ENCODE measurements at regions of chr1 and their contacts with region 1.

Region 1: DNA sequence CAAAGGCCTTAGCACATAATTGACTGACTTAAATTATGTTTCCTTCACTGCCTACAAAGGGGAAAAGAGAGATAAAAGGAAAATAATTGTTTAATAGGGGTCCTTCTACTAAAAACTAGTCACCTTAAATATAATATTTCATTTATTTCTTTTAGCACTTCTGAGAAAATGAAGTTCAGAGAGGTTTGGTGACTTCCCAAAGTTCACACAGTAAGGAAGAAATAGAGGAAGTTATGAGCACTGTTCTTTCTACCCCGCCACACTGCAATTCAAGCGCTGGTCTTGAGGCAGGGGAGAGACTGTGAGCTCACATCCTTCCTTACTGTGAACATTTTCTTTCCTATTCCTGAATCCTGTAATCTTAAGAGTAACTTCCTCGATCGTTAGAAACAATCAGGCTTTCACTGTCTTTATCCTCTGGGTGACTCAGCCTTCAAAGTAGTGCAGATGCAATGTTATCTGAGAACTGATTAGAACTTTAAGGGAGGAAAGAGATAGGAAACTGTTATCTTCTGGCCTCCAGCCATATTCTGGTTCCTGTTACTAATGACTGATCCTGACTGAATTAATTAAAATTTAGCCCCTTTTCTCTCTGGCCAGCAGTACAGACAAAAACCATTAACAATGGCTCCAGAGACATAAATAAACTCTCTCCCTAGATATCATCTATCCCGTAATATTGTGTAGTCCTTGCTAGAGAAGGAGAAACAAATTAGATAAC is 6.8 kb downstream of the RGS5 start:
- DNase-seq: no peak
- ATAC-seq: peak; percentile 62 to 88 (median 79)
- H3K4me3 ChIP-seq: peak overlapping the region in 7 of 12 donors; percentile 10 to 57 (median 51)
- H3K27ac ChIP-seq: peak overlapping the region in 8 of 12 donors; percentile 9 to 59 (median 42)
- H3K4me1 ChIP-seq: peaks cover 0 to 29% (median 7%) of the 10 kb centered on the region in 12 donors
- H3K27me3 ChIP-seq: no peaks in the 10 kb centered on the region
- CTCF ChIP-seq: no peak
- POLR2A ChIP-seq: no peak

Region 2: DNA sequence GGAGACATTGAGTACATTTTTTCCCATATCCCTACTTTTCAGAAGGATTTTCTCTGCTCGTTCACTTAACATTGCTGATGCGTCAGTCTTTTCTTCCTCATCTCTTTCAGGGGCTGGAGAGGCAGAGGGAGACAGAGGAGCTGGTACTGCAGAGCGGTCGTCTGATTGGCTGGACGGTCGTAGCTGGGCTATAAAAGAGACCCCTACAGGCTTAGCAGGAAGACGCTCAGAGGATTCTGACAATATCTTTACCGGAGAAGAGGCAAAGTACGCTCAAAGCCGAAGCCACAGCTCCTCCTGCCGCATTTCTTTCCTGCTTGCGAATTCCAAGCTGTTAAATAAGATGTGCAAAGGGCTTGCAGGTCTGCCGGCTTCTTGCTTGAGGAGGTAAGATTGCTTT is 126.7 kb before region 1 on chr1 and contains the start of gene RGS4:
- intact Hi-C with region 1: no loop called
- DNase-seq: peak; percentile 55 to 70 (median 64)
- ATAC-seq: peak; percentile 92 to 98 (median 94)
- H3K4me3 ChIP-seq: peak within 1 kb of the TSS in 11 of 12 donors; percentile 12 to 65 (median 48)
- H3K27ac ChIP-seq: peak within 1 kb of the TSS in 7 of 12 donors; percentile 3 to 62 (median 41)
- H3K4me1 ChIP-seq: peaks cover 0 to 5% (median 0%) of the 10 kb centered on the region in 12 donors
- H3K27me3 ChIP-seq: peaks cover 0 to 18% (median 0%) of the 10 kb centered on the region in 9 donors
- CTCF ChIP-seq: peak in 7 of 12 donors; percentile 16 to 59 (median 45)
- POLR2A ChIP-seq: peak in 1 of 2 donors; percentile 60
- total RNA-seq, gene RGS4: 0.81 to 17.7 (median 5.4) TPM in 8 of 9 donors, not detected in the other

Region 3: DNA sequence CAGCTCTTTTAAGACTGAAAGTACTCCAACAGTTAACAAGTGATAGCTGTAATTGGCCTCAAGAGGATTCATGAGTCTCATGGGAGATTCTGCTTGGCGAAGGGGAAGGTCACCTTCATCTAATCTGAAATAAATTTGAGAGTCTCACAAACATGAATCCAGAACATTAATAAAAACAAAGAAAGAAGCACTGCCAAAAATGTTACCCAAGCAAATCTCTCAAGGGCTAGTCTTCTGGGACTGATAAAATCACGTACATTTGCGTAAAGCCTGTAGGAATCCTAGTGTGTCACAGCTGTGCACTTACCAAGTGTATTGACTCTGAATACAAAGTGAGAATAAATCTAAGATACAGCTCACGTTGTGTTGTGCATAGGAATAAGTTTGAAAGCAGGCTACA is 104.7 kb after region 1 on chr1:
- intact Hi-C with region 1: loop called in 4 of 10 experiments (anchors 5 to 10 kb)
- DNase-seq: no peak
- ATAC-seq: peak in 2 of 4 donors; percentile 45 to 54
- H3K4me3 ChIP-seq: no peak overlapping the region
- H3K27ac ChIP-seq: peak overlapping the region in 1 of 12 donors; percentile 0
- H3K4me1 ChIP-seq: peaks cover 0 to 8% (median 0%) of the 10 kb centered on the region in 12 donors
- H3K27me3 ChIP-seq: no peaks in the 10 kb centered on the region
- CTCF ChIP-seq: no peak
- POLR2A ChIP-seq: no peak

Region 4: DNA sequence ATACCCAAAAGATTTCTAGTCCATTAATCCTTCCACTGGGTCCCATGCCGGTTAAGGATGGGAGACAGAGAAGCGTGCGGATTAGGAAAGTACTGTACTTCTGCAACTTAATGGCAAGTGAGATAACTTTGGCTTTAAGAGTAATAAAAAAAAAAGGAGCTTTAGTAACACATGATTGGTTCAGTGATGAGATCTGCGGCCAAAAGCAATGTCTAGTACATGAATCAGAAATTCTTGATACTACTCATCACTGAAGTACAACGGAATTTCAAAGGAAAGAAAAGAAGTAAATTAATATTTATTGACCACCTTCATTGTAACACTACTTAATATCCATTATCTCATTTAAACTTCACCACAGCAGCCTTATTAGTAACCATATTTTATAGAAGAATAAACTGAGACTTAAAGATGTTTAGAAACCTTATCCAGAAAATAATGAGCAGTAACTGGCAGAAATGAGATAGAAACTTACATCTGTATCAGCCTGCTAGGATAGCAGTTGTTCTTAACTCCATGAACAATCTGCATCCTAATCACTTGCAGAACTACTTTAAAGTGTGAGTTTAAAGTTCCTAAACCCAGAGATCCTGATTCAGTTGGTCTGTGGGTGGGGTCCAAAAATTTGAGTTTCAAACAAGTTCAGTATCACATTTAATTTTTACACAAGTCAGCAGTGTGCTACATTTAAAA is 111.7 kb after region 1 on chr1:
- intact Hi-C with region 1: loop called in 4 of 10 experiments (anchors 5 to 10 kb)
- DNase-seq: no peak
- ATAC-seq: no peak
- H3K4me3 ChIP-seq: no peak overlapping the region
- H3K27ac ChIP-seq: no peak overlapping the region
- H3K4me1 ChIP-seq: no peaks in the 10 kb centered on the region
- H3K27me3 ChIP-seq: no peaks in the 10 kb centered on the region
- CTCF ChIP-seq: no peak
- POLR2A ChIP-seq: no peak

Region 5: DNA sequence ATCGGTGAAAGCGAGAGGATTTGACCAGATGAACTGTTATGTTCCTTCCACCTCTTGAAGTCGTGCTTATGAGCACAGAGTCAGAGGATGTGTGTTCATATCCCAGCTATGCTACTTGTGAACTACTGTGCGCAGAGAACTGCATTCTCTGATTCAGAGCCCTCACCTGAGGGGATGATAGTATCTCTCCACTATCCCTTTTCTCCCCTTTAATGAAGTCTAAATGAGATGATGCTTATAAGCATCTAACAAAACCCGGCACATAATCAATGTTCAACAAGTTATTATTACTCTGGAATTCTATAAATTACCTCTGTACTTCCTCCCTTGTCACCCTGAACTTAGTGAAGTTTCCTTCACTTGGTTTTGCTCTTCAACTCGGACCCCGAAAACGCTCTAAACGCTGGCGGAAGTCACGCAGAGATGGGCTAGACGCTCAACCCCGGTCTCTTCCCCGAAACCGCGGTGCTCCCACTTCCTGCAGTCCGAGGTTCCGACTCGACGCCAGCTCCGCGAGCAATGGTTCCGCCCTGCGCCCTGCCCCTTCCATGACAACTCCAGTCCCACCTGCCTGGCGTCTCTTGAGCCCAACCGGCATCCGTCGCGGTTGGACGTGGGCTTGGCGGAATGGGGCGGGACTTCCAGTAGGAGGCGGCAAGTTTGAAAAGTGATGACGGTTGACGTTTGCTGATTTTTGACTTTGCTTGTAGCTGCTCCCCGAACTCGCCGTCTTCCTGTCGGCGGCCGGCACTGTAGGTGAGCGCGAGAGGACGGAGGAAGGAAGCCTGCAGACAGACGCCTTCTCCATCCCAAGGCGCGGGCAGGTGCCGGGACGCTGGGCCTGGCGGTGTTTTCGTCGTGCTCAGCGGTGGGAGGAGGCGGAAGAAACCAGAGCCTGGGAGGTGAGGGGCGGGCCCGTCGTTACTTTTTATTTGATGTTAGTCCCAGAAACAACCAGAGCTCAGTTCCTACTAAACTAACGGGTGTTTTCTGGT is 125.7 kb after region 1 on chr1 and contains the start of gene NUF2:
- intact Hi-C with region 1: no loop called
- DNase-seq: peak; percentile 97 to 99 (median 98)
- ATAC-seq: peak; percentile 99 to 100 (median 100)
- H3K4me3 ChIP-seq: peak within 1 kb of the TSS; percentile 59 to 85 (median 70)
- H3K27ac ChIP-seq: peak within 1 kb of the TSS in 11 of 12 donors; percentile 42 to 80 (median 75)
- H3K4me1 ChIP-seq: peaks cover 0 to 21% (median 15%) of the 10 kb centered on the region in 12 donors
- H3K27me3 ChIP-seq: no peaks in the 10 kb centered on the region
- CTCF ChIP-seq: peak in 3 of 12 donors; percentile 5 to 25 (median 8)
- POLR2A ChIP-seq: peak in 1 of 2 donors; percentile 44
- total RNA-seq, gene NUF2: 0.20 to 3.2 (median 0.71) TPM in 6 of 9 donors, not detected in the others

Region 6: GRCh38 chr1:163388970-163389369 is 193.1 kb after region 1 on chr1:
- intact Hi-C with region 1: no loop called
- DNase-seq: no peak
- ATAC-seq: no peak
- H3K4me3 ChIP-seq: no peak overlapping the region
- H3K27ac ChIP-seq: no peak overlapping the region
- H3K4me1 ChIP-seq: no peaks in the 10 kb centered on the region
- H3K27me3 ChIP-seq: peaks cover 0 to 18% (median 0%) of the 10 kb centered on the region in 9 donors
- CTCF ChIP-seq: no peak
- POLR2A ChIP-seq: no peak

Region 7: GRCh38 chr1:163673759-163674151 is 477.9 kb after region 1 on chr1:
- intact Hi-C with region 1: no loop called
- DNase-seq: no peak
- ATAC-seq: no peak
- H3K4me3 ChIP-seq: no peak overlapping the region
- H3K27ac ChIP-seq: no peak overlapping the region
- H3K4me1 ChIP-seq: peaks cover 0 to 3% (median 0%) of the 10 kb centered on the region in 12 donors
- H3K27me3 ChIP-seq: no peaks in the 10 kb centered on the region
- CTCF ChIP-seq: no peak
- POLR2A ChIP-seq: no peak